ENCODE measurements at regions of chr2 and their contacts with region 1.

Region 1: GRCh38 chr2:148509288-148509902 is 135.2 kb upstream of the EPC2 start:
- DNase-seq: peak; percentile 81 to 89 (median 85)
- ATAC-seq: peak; percentile 94 to 100 (median 98)
- H3K4me3 ChIP-seq: peak overlapping the region in 9 of 12 donors; percentile 18 to 49 (median 38)
- H3K27ac ChIP-seq: peak overlapping the region in 7 of 12 donors; percentile 6 to 57 (median 28)
- H3K4me1 ChIP-seq: peaks cover 0 to 17% (median 7%) of the 10 kb centered on the region in 12 donors
- H3K27me3 ChIP-seq: no peaks in the 10 kb centered on the region
- CTCF ChIP-seq: peak; percentile 82 to 96 (median 88)
- POLR2A ChIP-seq: no peak

Region 2: DNA sequence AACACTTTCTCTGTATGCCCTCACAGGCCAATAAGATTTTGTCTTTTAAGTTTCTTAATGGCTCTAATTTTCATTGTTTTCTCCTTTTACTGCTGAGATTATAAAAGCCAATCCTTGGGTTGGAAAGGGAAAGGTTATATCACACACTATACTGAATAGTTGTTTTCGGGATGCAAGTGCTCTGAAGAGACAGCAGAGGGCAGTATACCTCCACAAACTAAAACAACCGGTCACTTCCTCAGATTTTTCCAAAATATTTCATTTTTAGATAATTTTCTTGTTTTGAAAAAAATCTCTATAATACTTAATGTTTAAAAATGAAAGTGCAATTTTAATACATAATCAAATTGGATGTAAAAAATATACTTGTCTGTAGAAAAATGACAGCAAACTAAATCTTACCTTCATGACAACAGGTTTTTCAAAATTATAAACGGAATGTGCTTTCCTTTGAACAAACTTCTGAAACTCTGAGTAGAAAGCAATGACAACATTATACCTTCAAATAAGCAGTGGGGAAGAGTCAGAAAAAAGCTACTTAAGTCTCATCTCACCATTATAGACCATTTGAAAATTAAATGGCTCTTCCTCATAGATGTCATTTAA is 571.5 kb before region 1 on chr2:
- intact Hi-C with region 1: loop called (anchors 1 to 5 kb)
- DNase-seq: no peak
- ATAC-seq: peak in 3 of 4 donors; percentile 55 to 65 (median 62)
- H3K4me3 ChIP-seq: no peak overlapping the region
- H3K27ac ChIP-seq: no peak overlapping the region
- H3K4me1 ChIP-seq: no peaks in the 10 kb centered on the region
- H3K27me3 ChIP-seq: no peaks in the 10 kb centered on the region
- CTCF ChIP-seq: peak; percentile 78 to 95 (median 90)
- POLR2A ChIP-seq: no peak

Region 3: DNA sequence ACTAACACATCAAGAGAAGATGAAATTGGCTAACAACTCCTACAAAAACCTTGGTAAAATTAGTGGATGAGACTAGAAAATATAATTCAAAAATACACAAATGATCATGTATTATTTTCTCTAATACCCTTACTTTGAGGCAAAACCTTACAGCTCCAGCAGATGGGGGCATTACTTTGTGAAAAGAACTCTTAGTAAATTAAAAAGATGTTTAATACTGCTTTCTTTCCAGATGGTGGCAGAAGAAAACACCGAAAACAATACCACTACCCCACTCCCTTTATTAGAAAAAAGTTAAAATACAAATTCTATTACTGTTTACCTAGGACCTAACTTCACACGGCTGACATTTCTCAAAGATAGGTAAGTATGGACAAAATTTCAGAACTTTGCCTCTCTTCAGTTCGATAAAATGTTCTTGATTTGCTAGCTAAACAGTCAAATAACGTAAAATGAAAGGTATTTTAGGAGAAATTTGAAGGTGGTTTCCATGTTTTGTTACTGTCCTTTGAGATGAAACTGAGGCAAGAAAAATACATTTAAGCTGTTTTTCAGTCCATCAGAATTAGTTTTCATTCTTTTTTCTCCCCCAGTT is 519.5 kb before region 1 on chr2:
- intact Hi-C with region 1: loop called in 6 of 10 experiments (anchors 2 to 10 kb)
- DNase-seq: no peak
- ATAC-seq: peak in 1 of 4 donors; percentile 76
- H3K4me3 ChIP-seq: no peak overlapping the region
- H3K27ac ChIP-seq: no peak overlapping the region
- H3K4me1 ChIP-seq: peaks cover 0 to 3% (median 0%) of the 10 kb centered on the region in 12 donors
- H3K27me3 ChIP-seq: no peaks in the 10 kb centered on the region
- CTCF ChIP-seq: peak; percentile 27 to 81 (median 66)
- POLR2A ChIP-seq: no peak

Region 4: DNA sequence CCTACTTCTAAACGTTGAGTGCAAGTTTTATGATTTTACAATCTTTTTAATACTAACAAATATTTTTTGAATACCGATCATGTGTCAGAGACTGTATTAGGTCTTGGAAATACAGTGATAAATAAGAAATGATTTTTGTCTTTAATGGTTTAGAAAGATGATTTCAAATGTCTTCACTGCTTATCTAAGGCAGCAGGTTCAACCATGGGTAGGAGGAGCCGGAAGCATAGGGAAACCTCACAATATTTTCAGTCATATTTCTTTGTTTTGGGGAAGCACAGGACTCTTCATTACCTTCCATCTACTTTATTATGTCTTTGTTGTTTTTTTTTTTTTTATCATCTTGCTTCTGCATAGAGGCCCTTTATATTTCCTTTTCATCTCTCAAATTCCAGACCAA is 30.0 kb before region 1 on chr2:
- intact Hi-C with region 1: no loop called
- DNase-seq: no peak
- ATAC-seq: no peak
- H3K4me3 ChIP-seq: no peak overlapping the region
- H3K27ac ChIP-seq: no peak overlapping the region
- H3K4me1 ChIP-seq: no peaks in the 10 kb centered on the region
- H3K27me3 ChIP-seq: no peaks in the 10 kb centered on the region
- CTCF ChIP-seq: no peak
- POLR2A ChIP-seq: no peak

Region 5: GRCh38 chr2:148552675-148553331 is 43.4 kb after region 1 on chr2:
- intact Hi-C with region 1: no loop called
- DNase-seq: no peak
- ATAC-seq: peak in 1 of 4 donors; percentile 57
- H3K4me3 ChIP-seq: peak overlapping the region in 10 of 12 donors; percentile 28 to 55 (median 38)
- H3K27ac ChIP-seq: peak overlapping the region in 1 of 12 donors; percentile 40
- H3K4me1 ChIP-seq: peaks cover 0 to 17% (median 0%) of the 10 kb centered on the region in 12 donors
- H3K27me3 ChIP-seq: no peaks in the 10 kb centered on the region
- CTCF ChIP-seq: no peak
- POLR2A ChIP-seq: no peak